Cardiac septum (tissue), 1 donor: ENCODE measurements at regions of chr6 and their contacts with region 1.

Region 1: DNA sequence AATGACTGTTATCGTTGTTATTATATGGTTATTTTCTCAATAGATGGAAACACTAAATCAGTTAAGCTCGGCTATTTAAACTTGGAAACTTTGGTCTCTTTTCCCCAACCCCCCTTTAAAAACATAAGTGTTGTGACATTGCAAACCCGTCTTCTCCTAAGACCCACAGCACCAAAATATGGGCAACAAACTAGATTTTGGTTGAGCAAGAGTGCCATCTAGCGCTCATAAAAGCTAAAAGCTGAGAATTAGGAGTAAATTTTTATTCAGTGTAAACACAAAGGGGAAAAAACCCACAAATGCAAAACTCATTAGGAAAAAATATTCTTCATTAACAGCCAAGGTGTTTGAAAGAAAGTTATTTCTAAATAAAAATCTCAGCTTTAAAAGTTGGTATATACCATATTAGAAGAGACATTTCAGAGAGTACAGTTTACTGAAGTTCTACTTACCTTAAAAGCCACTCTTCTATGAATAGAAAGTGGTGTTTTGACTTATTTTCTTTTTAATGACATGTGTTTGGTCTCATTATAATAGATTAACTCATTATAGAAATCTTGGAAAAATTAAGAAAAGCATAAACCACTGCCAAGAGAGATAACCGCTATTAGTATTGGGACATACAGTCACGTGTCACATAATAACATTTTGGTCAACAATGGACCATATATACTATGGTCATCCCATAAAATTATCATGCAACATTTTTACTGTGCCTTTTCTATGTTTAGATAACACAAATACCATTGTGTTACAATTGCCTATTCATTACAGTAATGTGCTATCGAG is 21.1 kb downstream of the SESN1 start:
- DNase-seq: no peak

Region 2: GRCh38 chr6:108848116-108848868 is 225.2 kb before region 1 on chr6 and contains the start of gene ARMC2:
- intact Hi-C with region 1: loop called (anchors 5 kb)
- DNase-seq: peak; percentile 99
- total RNA-seq, gene ARMC2: 11.0 TPM